ENCODE measurements at regions of chr20 and their contacts with region 1.

Region 1: GRCh38 chr20:32972181-32973076 is 31.8 kb downstream of the SUN5 start:
- DNase-seq: peak; percentile 94
- H3K4me3 Mint-ChIP-seq: no peak overlapping the region
- H3K27ac Mint-ChIP-seq: no peak overlapping the region
- H3K4me1 Mint-ChIP-seq: peaks cover 74% of the 10 kb centered on the region
- H3K27me3 Mint-ChIP-seq: no peaks in the 10 kb centered on the region

Region 2: DNA sequence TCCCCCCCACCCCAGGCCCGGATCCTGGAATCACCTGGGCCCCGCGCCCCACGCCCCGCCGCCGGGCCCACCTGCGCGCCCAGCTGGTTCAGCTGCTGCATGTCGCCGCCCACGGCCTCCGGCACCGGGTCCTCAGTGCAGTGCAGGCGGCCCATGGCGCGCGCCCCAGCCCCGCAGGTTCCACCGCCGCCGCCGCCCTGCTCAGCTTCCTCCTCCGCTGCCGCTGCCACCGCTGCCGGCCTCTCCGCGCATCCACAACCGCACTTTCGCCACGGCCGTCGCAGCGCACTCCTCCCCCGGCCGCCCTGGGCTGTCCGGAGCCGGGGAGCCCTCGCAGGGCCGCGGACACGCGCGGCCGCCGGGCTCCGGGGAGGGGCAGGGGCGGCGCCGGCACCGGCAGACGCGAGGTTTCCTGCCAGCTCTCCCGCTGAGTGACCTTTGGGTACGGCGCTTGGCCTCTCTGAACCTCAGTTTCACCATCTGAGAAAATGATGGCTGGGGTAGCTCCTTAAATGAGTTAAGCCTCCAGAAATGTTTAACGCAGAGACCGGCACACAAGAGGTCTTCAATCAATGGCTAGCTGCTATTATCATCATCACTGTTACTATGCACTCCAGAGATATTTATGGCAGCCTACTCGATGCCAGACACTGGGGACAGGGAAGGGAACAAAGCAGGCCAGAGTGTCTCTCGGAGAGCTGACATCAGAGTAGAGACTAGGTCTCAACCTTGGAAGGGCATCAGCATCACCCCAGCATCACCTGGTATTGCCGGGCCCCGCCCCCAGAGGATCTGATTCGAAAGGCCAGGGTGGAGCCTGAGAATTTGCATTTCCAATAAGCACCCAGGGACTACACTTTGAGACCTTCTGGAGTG is 229.0 kb before region 1 on chr20 and contains the start of gene COMMD7:
- CTCF ChIA-PET with region 1: no interaction called
- intact Hi-C with region 1: loop called (anchors 5 kb)
- DNase-seq: peak; percentile 93
- H3K4me3 Mint-ChIP-seq: peak within 1 kb of the TSS; percentile 94
- H3K27ac Mint-ChIP-seq: peak within 1 kb of the TSS; percentile 95
- H3K4me1 Mint-ChIP-seq: peaks cover 34% of the 10 kb centered on the region
- H3K27me3 Mint-ChIP-seq: no peaks in the 10 kb centered on the region
- total RNA-seq, gene COMMD7: 33.8 to 36.6 TPM

Region 3: GRCh38 chr20:32819992-32820710 is 152.3 kb before region 1 on chr20:
- CTCF ChIA-PET with region 1: no interaction called
- intact Hi-C with region 1: loop called (anchors 1 kb)
- DNase-seq: peak; percentile 76
- H3K4me3 Mint-ChIP-seq: peak overlapping the region; percentile 97
- H3K27ac Mint-ChIP-seq: peak overlapping the region; percentile 94
- H3K4me1 Mint-ChIP-seq: peaks cover 35% of the 10 kb centered on the region
- H3K27me3 Mint-ChIP-seq: no peaks in the 10 kb centered on the region

Region 4: DNA sequence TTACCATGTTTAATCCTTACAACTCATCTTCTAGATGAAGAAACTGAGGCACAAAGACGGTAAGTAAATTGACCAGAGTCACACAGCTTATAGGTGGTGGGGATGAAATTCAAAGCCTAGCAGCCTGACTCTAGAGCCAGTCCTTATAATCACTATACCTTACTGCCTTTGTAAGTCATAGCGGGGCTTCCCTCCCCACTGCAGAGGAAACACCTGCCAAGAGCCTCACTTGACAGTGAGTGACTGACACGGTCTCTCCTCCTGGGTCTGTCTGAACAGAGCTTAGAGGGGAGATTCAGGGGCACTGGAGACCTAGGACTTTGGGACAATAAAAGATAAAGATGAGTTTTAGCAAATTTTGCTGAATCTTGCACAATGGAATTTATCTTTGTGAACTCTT is 19.0 kb after region 1 on chr20:
- CTCF ChIA-PET with region 1: interaction called, 6 read pairs
- intact Hi-C with region 1: loop called (anchors 1 kb)
- DNase-seq: peak; percentile 68
- H3K4me3 Mint-ChIP-seq: no peak overlapping the region
- H3K27ac Mint-ChIP-seq: no peak overlapping the region
- H3K4me1 Mint-ChIP-seq: peaks cover 37% of the 10 kb centered on the region
- H3K27me3 Mint-ChIP-seq: no peaks in the 10 kb centered on the region

Region 5: DNA sequence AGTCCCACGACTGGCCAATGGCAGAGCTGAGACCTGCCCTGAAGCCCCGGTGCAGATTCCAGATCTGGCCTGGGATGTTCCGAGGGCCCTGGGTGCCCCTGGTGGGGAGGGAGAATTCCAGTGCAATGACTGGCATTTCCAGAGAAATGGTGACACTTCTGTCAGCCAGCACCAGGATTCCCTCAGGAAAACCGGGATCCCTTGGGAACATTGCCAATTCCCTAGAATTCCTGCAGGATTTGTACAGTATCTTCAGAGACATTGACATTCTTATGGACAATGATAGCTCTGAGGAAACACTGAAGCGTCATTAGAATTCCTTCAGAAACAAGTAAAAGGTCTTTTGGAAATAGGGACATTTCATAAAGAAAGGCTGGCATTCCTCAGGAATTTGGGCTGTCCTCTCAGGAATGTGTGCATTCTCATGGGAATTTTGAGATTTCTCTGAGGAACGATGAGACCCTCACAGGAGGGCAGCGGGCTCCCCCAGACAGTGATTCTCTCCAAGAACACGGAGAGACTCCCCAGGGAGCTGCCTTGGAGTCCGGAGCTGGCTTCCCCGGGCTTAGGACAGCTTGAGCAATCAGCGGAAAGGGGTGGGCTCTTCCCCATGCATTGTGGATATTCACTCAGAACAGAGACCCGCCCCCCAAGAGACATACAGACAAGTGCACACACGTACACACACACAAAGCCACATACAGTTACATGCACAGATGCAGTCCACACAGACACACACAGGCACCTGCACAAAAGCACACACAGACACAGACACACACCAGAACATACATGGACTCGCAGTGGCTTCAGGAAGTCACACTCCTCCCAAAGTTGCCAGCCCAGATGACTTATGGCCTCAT is 160.3 kb after region 1 on chr20:
- CTCF ChIA-PET with region 1: no interaction called
- intact Hi-C with region 1: no loop called
- DNase-seq: no peak
- H3K4me3 Mint-ChIP-seq: no peak overlapping the region
- H3K27ac Mint-ChIP-seq: no peak overlapping the region
- H3K4me1 Mint-ChIP-seq: no peaks in the 10 kb centered on the region
- H3K27me3 Mint-ChIP-seq: no peaks in the 10 kb centered on the region

Measured in activated naive CD4-positive, alpha-beta T cell treated with anti-CD3 and anti-CD28 coated beads for 36 hours (primary cell).